Panc1 (cell line): ENCODE measurements at regions of chr11 and their contacts with region 1.

Region 1: GRCh38 chr11:10307442-10308207 is 2.8 kb downstream of the ADM start:
- DNase-seq: no peak
- ATAC-seq: peak; percentile 46
- H3K4me3 ChIP-seq: peak overlapping the region; percentile 64 to 90
- H3K27ac ChIP-seq: peak overlapping the region; percentile 100
- H3K4me1 ChIP-seq: peaks cover 28% of the 10 kb centered on the region
- H3K27me3 ChIP-seq: no peaks in the 10 kb centered on the region
- CTCF ChIP-seq: peak; percentile 100

Region 2: GRCh38 chr11:8615291-8616032 is 1692.2 kb before region 1 on chr11:
- CTCF ChIA-PET with region 1: no interaction called
- POLR2A ChIA-PET with region 1: no interaction called
- in situ Hi-C with region 1: no loop called
- intact Hi-C with region 1: no loop called
- DNase-seq: no peak
- ATAC-seq: no peak
- H3K4me3 ChIP-seq: no peak overlapping the region
- H3K27ac ChIP-seq: no peak overlapping the region
- H3K4me1 ChIP-seq: no peaks in the 10 kb centered on the region
- H3K27me3 ChIP-seq: no peaks in the 10 kb centered on the region
- CTCF ChIP-seq: no peak

Region 3: GRCh38 chr11:8964324-8965320 is 1343.0 kb before region 1 on chr11 and contains the start of gene TMEM9B:
- CTCF ChIA-PET with region 1: no interaction called
- POLR2A ChIA-PET with region 1: interaction called, 11 read pairs
- in situ Hi-C with region 1: no loop called
- intact Hi-C with region 1: no loop called
- DNase-seq: peak; percentile 73
- ATAC-seq: peak; percentile 94
- H3K4me3 ChIP-seq: peak within 1 kb of the TSS; percentile 61 to 86
- H3K27ac ChIP-seq: peak within 1 kb of the TSS; percentile 93
- H3K4me1 ChIP-seq: peaks cover 27% of the 10 kb centered on the region
- H3K27me3 ChIP-seq: no peaks in the 10 kb centered on the region
- CTCF ChIP-seq: no peak
- total RNA-seq, gene TMEM9B: 76.2 TPM

Region 4: DNA sequence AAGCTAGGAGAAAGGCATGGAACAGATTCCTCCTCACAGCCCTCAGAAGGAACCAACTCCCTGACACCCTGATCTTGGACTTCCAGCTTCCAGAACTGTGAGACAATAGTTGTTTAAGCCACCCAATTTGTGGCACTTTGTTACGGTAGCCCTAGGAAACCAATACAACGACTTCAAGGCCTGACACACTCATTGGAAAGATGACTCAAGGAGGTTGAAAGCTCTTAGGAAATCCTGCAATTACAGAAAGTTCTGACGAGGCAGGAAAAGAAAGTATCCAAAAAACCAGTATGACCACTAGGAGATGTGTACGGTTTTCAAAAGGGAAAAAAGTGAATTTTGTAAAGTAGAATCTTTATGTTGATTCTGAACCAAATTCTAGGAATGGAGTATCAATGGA is 482.3 kb before region 1 on chr11:
- CTCF ChIA-PET with region 1: no interaction called
- POLR2A ChIA-PET with region 1: no interaction called
- in situ Hi-C with region 1: no loop called
- intact Hi-C with region 1: loop called (anchors 10 kb)
- DNase-seq: no peak
- ATAC-seq: no peak
- H3K4me3 ChIP-seq: no peak overlapping the region
- H3K27ac ChIP-seq: peak overlapping the region; percentile 97
- H3K4me1 ChIP-seq: peaks cover 48% of the 10 kb centered on the region
- H3K27me3 ChIP-seq: no peaks in the 10 kb centered on the region
- CTCF ChIP-seq: no peak; the same call in 1 of the 2 replicates

Region 5: DNA sequence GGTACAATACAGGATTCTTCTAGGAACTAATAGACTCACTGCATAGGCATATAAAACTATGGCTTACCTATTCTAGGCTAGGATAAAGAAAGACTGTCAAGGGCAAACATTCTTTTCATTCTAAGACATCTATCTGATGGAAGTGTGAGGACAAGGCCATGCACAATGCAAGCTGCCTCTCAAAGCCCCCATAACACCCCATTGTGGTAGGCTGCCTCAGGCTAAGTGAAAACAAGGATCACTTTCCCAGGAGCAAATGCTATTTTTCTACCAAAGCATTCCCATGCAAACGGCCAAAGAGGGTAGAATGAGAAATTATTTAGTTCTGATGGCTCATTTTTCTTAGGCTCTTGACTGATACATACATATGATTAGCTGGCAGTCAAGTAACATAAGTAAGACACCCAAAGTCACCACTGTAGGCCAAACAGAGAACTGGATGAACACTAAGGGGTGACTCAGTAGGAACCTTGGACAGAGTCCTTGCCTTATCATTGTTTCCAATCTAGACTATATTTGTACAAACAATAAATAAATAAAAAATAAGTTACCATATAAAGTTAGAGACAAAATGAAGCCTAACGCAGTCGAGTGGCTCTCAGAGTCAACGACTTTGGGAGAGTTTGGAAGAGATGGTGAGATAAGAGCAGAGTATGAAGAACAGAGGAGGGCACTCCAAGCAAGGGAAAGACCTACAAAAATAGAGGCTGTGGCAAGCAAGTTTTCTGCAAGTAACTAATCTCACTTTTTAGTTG is 317.2 kb before region 1 on chr11:
- CTCF ChIA-PET with region 1: interaction called, 5 read pairs
- POLR2A ChIA-PET with region 1: no interaction called
- in situ Hi-C with region 1: no loop called
- intact Hi-C with region 1: loop called (anchors 5 kb)
- DNase-seq: peak; percentile 76
- ATAC-seq: peak; percentile 92
- H3K4me3 ChIP-seq: no peak overlapping the region
- H3K27ac ChIP-seq: peak overlapping the region; percentile 79
- H3K4me1 ChIP-seq: peaks cover 15% of the 10 kb centered on the region; the same call in 1 of the 2 replicates
- H3K27me3 ChIP-seq: no peaks in the 10 kb centered on the region
- CTCF ChIP-seq: peak; percentile 49; the same call in 1 of the 2 replicates

Region 6: DNA sequence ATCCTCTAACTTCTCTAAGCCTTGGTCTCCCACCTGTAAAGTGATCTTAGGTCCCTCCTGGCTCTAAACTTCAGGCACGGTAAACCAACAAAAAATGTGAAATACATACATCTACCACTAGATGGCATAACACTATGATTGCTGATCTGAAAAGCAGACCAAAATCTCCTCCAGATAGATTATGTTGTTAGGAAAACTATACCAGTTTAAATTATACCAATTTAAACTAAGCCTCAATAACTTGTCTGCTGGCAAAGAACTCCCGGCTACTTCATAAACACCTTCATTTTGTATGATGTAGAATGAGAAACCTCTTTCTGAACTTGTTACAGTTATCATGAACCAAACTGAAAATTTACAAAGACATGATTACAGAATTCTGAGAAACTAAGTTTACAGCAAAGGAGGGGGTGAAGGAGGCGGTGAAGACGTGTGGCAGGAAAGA is 99.5 kb before region 1 on chr11:
- CTCF ChIA-PET with region 1: interaction called, 13 read pairs
- POLR2A ChIA-PET with region 1: interaction called, 8 read pairs
- in situ Hi-C with region 1: no loop called
- intact Hi-C with region 1: loop called (anchors 2 kb)
- DNase-seq: peak; percentile 67
- ATAC-seq: peak; percentile 91
- H3K4me3 ChIP-seq: no peak overlapping the region
- H3K27ac ChIP-seq: peak overlapping the region; percentile 77
- H3K4me1 ChIP-seq: peaks cover 28% of the 10 kb centered on the region
- H3K27me3 ChIP-seq: no peaks in the 10 kb centered on the region
- CTCF ChIP-seq: peak; percentile 86; the same call in 1 of the 2 replicates

Region 7: DNA sequence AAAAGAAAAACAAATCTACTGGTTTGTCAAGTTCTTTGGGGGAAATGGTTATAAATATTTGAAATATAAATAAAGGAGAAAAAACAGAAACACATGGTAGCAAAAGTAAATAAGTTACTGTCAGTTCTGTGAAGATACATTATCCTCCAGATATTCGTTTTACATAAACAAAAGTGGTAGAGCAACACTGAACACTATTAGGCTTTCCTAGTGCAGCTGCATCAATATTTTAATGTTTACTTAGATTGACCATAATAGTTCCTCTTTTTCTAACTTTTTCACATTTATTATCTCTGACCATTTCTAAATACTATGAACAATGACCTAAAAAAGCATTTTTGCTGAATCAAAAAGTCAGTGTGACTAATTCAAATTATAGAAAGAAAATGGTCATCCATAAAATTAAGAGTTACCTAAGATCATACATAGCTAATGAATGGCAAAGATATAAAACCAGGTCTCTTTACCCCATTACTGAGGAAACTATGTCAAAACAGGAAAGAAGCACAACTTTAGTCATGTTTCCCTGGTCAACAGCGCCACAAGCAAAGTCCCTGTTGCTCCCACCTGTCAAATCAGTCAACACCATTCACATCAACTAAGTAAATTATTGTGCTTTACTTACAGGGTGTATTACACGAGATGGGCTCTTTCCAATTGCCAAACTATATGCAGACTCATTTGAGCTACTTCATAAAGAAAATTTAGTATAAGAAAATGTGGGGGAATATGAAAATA is 52.1 kb before region 1 on chr11:
- CTCF ChIA-PET with region 1: no interaction called
- POLR2A ChIA-PET with region 1: no interaction called
- in situ Hi-C with region 1: no loop called
- intact Hi-C with region 1: no loop called
- DNase-seq: no peak
- ATAC-seq: no peak
- H3K4me3 ChIP-seq: no peak overlapping the region
- H3K27ac ChIP-seq: no peak overlapping the region
- H3K4me1 ChIP-seq: peaks cover 4% of the 10 kb centered on the region; the same call in 1 of the 2 replicates
- H3K27me3 ChIP-seq: no peaks in the 10 kb centered on the region
- CTCF ChIP-seq: no peak

Region 8: DNA sequence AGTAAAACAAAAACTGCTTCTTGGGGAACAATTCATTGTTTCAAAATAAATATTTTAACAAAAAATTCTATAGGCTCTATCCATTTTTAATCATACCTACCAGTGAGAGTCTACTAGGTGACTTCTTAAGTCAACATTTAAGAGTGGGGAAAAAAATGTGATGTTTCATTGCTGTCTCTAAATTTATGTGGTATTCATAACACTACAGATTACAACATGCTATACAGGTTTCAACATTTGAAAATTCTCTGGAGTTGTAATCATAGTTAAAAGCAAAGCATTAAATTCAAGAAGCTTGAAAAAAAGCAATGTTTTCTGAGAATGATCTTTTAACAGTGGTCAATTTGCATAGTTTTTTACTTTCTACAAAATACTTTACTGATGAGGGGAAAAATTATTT is 31.9 kb before region 1 on chr11:
- CTCF ChIA-PET with region 1: no interaction called
- POLR2A ChIA-PET with region 1: no interaction called
- in situ Hi-C with region 1: no loop called
- intact Hi-C with region 1: no loop called
- DNase-seq: no peak
- ATAC-seq: no peak
- H3K4me3 ChIP-seq: no peak overlapping the region
- H3K27ac ChIP-seq: peak overlapping the region; percentile 5; the same call in 1 of the 2 replicates
- H3K4me1 ChIP-seq: peaks cover 12% of the 10 kb centered on the region
- H3K27me3 ChIP-seq: no peaks in the 10 kb centered on the region
- CTCF ChIP-seq: no peak

Region 9: GRCh38 chr11:10328314-10329090 is 20.9 kb after region 1 on chr11:
- CTCF ChIA-PET with region 1: interaction called, 3 read pairs
- POLR2A ChIA-PET with region 1: interaction called, 17 read pairs
- in situ Hi-C with region 1: no loop called
- intact Hi-C with region 1: no loop called
- DNase-seq: no peak
- ATAC-seq: peak; percentile 31
- H3K4me3 ChIP-seq: no peak overlapping the region
- H3K27ac ChIP-seq: peak overlapping the region; percentile 31; the same call in 1 of the 2 replicates
- H3K4me1 ChIP-seq: peaks cover 40% of the 10 kb centered on the region
- H3K27me3 ChIP-seq: no peaks in the 10 kb centered on the region
- CTCF ChIP-seq: no peak